ENCODE measurements at regions of chr6 and their contacts with region 1.

Region 1: DNA sequence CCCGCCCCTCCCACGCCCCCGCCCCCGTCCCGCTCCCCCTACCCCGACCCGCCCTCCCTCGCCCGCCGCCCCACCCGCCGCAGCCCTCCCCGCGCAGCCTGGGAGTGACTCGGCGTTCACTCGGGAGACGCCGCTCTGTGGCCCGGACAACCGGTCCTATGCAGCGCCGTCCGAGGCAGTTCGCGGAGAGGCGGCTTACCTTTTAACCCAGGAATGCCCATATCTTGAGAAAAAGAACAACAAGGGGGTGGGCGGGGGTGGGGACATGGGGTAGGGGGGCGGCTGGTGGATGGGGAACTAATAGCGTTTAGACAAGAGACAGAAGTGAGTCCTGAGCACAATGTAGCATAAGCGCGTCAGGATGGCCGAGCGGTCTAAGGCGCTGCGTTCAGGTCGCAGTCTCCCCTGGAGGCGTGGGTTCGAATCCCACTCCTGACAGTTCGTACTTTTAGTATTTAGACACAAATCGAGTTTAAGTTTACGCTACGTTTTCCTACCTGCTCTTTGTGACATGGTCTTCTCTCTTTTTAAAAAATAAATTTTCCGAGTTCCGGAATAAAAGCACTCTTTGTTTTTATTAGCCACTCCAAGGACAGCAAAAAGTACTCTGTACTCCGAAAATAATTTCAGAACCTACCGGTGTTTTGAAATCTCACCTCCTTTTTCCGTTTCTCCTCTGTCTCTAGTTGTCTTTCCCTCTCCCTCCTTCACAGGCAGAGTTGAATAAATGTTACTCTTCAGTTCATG is 17.1 kb upstream of the HMGN4 start:
- DNase-seq: peak; percentile 57 to 90
- H3K4me3 ChIP-seq: peak overlapping the region; percentile 56 to 75
- H3K27ac ChIP-seq: peak overlapping the region; percentile 98 to 99
- H3K4me1 ChIP-seq: peaks cover 3 to 10% of the 10 kb centered on the region in 2 donors
- H3K27me3 ChIP-seq: no peaks in the 10 kb centered on the region
- CTCF ChIP-seq: no peak

Region 2: GRCh38 chr6:26363882-26364701 is 156.9 kb before region 1 on chr6:
- intact Hi-C with region 1: loop called (anchors 5 kb)
- DNase-seq: no peak
- H3K4me3 ChIP-seq: peak overlapping the region; percentile 72 to 79
- H3K27ac ChIP-seq: peak overlapping the region; percentile 64 to 83
- H3K4me1 ChIP-seq: peaks cover 0 to 8% of the 10 kb centered on the region in 2 donors
- H3K27me3 ChIP-seq: no peaks in the 10 kb centered on the region
- CTCF ChIP-seq: no peak

Region 3: DNA sequence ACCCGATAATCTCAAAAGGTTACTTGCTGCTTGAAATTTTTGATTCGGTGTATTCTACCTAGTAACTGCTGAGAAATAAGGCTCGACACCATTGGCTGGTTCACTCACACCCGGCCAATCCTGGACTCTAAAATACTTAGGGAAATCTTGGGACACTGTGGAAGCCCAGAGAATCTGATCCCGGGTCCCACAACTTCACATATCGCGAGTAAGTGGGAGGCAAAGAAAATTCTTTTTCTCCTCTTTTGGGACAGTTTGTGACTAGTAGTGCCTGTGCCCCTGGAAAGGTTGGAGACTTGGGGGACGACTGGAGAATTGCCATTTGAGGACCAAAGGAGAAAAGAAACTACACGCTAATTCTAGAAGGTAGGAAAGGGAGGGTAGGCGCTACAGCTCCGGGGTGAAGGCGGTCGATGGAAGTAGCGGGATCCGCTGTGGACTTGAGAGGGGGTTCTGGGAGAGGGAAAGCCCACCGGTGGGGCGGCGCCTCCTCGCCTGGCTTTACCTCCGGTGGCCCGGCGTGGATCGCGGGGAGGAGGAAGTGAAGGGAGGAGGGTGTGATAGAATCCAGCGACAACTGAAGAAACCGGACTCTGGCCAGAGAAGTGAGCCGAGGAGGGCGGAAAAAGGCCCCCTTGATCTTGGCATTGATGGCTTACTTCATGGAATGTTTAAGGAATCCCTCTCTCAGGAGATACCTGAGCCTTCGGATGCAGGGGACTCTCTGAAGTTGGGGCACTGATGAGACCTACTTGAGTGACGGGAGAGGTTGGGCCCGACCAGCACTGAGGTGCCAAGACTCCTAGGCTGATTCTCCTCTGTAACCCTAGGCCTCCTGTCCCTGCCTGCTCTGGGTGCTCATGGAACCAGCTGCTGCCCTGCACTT is 99.5 kb before region 1 on chr6:
- intact Hi-C with region 1: loop called (anchors 5 kb)
- DNase-seq: peak; percentile 38 to 87
- H3K4me3 ChIP-seq: peak overlapping the region; percentile 52 to 97
- H3K27ac ChIP-seq: peak overlapping the region; percentile 75 to 95
- H3K4me1 ChIP-seq: peaks cover 5 to 35% of the 10 kb centered on the region in 2 donors
- H3K27me3 ChIP-seq: no peaks in the 10 kb centered on the region
- CTCF ChIP-seq: no peak

Region 4: DNA sequence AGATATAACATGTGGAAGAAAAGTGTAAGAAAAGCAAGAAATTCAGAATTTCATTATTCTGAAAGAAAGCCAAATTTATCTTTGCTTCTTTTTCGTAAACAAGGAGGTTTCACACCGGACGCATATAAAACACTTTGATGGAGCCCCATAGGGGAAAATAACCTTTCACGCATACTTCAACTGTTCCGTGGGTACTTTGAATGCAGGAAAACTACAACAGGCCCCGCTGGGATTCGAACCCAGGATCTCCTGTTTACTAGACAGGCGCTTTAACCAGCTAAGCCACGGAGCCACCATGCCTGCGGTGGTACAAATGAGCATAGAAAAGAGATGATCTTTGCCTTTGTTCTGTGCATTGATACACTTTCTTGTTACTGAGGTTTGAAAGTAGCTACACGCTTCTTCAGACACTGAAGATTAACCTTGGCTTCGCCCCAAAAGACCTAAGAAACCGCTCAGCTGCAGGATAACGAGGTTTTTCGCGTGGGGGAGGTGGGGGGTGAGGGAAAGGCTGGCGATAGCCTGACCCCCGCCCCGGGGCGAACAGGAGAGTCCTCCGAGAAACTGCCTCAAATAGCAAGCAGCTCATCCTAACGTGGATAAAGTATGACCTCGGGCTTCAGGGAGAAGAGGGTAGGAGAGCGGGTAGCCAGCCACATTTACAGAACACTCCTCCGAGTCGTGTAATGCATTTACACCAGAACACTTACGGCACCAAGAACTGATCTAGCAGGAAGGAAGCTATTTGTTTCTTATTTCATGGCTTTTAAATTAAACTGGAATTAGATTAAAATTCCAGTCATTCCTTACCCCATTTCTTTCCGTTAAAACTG is 11.9 kb after region 1 on chr6:
- intact Hi-C with region 1: loop called (anchors 1 kb)
- DNase-seq: peak in 1 of 2 donors; percentile 96
- H3K4me3 ChIP-seq: peak overlapping the region; percentile 69 to 85
- H3K27ac ChIP-seq: peak overlapping the region; percentile 79 to 85
- H3K4me1 ChIP-seq: peaks cover 5 to 24% of the 10 kb centered on the region in 2 donors
- H3K27me3 ChIP-seq: no peaks in the 10 kb centered on the region
- CTCF ChIP-seq: no peak

Region 5: DNA sequence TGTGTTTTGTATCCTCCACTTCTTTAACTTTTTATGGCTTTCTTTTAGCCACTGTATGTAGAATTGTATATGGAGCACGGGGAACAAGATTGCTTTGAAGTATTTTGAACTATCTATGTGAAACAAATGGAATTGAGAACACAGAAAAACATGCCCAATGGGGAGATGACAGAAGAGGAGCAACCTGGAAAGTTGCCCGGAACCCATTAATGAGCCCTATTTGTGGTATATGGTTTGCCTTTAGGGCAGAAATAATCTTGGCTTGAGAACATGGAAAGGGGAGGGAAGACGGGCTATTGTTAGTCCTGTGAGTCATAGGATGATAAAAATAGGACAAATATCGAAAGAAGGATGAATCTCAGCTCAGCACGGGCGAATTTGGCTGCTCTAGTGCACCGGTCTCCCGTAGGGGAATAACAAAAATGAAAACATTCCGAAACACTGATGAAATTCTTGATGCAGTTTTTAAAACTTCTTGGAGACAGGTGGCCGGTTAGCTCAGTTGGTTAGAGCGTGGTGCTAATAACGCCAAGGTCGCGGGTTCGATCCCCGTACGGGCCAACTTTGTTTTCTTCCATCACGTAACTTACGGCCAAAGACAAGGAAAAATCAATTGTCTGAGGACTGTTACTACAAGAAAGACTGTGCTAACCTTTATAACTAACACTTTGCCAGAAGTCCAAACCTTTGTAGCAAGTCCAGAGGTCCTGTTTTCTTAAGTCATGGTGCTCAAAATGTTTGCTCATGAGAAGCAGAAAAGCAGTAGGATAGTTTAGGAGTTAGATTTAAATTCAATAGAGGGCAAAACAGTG is 32.8 kb after region 1 on chr6:
- intact Hi-C with region 1: loop called (anchors 1 kb)
- DNase-seq: peak; percentile 57 to 93
- H3K4me3 ChIP-seq: peak overlapping the region; percentile 31 to 59
- H3K27ac ChIP-seq: peak overlapping the region; percentile 70 to 75
- H3K4me1 ChIP-seq: peaks cover 0 to 4% of the 10 kb centered on the region in 2 donors
- H3K27me3 ChIP-seq: no peaks in the 10 kb centered on the region
- CTCF ChIP-seq: no peak

Region 6: DNA sequence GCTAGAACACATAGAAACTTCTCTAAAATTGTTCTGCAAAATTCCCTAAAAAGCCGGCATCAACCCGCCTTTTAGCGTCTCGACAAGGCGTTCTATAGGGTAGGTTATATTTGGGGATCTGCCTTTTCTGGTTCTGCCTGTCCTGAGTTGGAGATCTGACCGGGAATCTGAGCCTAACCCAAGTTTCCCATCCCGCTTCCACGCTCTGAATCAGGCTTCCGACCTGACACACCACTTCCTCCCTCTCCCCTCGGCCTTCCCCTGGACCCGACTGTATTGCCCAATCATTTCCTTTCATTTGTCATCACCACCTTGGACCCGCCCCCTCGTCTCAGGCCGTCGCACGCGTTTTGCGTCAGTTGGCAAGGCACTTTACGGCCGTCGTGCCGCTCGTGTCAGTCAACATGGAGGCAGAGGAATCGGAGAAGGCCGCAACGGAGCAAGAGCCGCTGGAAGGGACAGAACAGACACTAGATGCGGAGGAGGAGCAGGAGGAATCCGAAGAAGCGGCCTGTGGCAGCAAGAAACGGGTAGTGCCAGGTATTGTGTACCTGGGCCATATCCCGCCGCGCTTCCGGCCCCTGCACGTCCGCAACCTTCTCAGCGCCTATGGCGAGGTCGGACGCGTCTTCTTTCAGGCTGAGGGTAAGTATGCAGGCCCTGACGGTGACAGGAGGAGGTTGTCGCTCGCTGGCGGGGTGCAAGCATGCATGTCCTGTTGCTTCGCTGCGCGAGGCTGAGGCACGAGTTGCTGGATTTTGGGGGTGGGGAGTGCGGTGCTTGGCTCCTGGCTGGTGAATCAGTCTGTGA is 75.8 kb after region 1 on chr6 and contains the start of gene ABT1:
- intact Hi-C with region 1: loop called (anchors 2 kb)
- DNase-seq: peak; percentile 92 to 99
- H3K4me3 ChIP-seq: peak within 1 kb of the TSS; percentile 72 to 91
- H3K27ac ChIP-seq: peak within 1 kb of the TSS; percentile 86 to 91
- H3K4me1 ChIP-seq: peaks cover 4 to 6% of the 10 kb centered on the region in 2 donors
- H3K27me3 ChIP-seq: peaks cover 18% of the 10 kb centered on the region
- CTCF ChIP-seq: no peak
- total RNA-seq, gene ABT1: 20.1 TPM